CD4-positive, alpha-beta T cell (primary cell): ENCODE measurements at regions of chr20 and their contacts with region 1.

Region 1: DNA sequence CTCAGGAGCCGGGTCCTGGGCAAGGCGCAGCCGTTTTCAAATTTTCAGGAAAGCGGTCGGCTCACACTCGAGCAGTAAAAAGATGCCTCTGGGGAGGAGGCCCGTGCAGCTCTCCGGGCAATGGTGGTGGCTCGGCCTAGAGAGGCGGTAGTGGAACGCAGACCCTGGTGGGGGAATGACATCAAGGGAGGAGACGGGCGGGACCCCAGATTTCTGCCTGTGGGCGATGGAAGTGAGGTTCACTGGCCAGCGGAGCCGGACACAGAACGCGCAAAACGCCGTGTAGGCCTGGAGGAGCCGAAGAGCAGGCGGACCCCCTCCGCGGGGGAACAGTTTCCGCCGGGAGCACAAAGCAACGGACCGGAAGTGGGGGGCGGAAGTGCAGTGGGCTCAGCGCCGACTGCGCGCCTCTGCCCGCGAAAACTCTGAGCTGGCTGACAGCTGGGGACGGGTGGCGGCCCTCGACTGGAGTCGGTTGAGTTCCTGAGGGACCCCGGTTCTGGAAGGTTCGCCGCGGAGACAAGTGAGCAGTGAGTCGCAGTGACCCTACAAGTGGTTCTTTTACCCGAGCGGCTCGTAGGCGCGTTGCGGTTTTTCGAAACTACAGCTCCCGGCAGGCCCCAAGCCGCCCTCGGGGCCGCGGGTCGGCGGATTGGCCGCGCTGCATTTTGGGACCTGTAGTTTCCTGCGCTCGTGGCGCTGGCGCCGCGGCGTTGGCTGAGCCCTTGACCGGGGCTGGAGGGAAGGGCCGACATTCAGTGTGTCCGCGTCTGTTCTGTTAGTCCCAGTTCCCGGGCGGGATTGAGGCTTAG is at the start of gene RTEL1:
- DNase-seq: peak; percentile 77 to 93 (median 86)
- ATAC-seq: peak; percentile 83
- H3K4me3 ChIP-seq: peak within 1 kb of the TSS; percentile 76
- H3K4me3 Mint-ChIP-seq: peak within 1 kb of the TSS; percentile 98
- H3K27ac ChIP-seq: peak within 1 kb of the TSS; percentile 56 to 87
- H3K27ac Mint-ChIP-seq: peak within 1 kb of the TSS; percentile 96
- H3K4me1 ChIP-seq: peaks cover 47% of the 10 kb centered on the region
- H3K4me1 Mint-ChIP-seq: peaks cover 38% of the 10 kb centered on the region
- H3K27me3 ChIP-seq: no peaks in the 10 kb centered on the region
- H3K27me3 Mint-ChIP-seq: no peaks in the 10 kb centered on the region
- CTCF ChIP-seq: no peak
- total RNA-seq, gene RTEL1: 25.5 to 27.6 TPM

Region 2: DNA sequence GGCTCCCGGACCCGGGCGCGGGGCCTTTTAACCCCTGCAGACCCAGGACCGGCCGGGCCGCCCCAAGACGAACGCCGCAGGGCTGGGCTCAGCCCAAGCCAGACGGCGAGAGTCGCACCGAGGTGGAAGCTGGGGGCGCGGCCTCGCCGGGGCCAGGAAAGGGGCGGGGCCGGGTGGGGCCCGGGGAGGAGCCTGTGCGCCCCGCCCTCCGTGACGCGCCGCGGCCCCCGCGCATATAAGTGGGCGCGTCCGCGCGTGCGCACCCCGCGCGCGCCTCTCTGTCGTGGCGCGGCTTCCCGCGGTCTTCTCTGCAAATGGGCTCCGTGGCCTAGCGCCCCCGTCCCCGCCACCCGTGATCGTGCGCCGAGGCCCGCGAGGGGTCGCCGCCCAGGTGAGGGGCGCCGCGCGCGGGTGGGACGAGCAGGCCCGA is 137.6 kb before region 1 on chr20 and contains the start of gene PPDPF:
- CTCF ChIA-PET with region 1: no interaction called
- POLR2A ChIA-PET with region 1: interaction called, 12 read pairs
- intact Hi-C with region 1: loop called in 1 of 2 experiments (anchors 5 kb)
- DNase-seq: peak; percentile 75 to 95 (median 84)
- ATAC-seq: peak; percentile 80
- H3K4me3 ChIP-seq: peak within 1 kb of the TSS; percentile 65
- H3K4me3 Mint-ChIP-seq: peak within 1 kb of the TSS; percentile 88
- H3K27ac ChIP-seq: peak within 1 kb of the TSS in 1 of 2 donors; percentile 35
- H3K27ac Mint-ChIP-seq: peak within 1 kb of the TSS; percentile 69
- H3K4me1 ChIP-seq: peaks cover 29% of the 10 kb centered on the region
- H3K4me1 Mint-ChIP-seq: peaks cover 13% of the 10 kb centered on the region
- H3K27me3 ChIP-seq: no peaks in the 10 kb centered on the region
- H3K27me3 Mint-ChIP-seq: no peaks in the 10 kb centered on the region
- CTCF ChIP-seq: no peak
- total RNA-seq, gene PPDPF: 249 to 251 TPM

Region 3: DNA sequence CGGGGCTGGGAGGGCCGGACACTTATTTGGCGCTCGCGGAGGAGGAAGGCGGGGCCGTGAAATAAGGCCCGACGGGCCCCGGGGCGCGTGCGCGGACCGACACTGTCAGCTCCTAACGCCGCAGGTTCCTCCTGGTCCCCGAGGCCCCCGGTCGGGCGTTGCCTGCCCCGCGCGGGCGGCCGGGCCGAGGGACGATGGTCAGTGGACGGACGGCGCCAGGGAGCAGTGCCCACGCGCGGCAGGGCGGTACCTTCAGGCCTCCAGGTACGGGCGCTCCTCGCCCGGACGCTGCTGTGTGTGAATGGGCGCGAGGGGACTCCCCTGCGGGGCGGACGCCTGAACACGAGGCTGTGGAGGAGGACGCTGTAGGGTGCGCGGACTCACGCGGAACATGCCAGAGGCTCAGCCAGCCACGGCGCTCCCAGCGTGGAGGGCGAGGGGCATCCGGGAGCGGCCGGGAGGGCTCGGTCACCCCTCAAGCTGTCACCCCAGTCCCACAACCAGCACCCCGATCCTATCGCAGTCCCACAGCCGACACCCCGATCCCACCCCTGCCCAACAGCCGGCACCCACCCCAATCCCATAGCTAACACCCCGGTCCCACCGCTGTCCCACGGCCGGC is 30.9 kb before region 1 on chr20:
- CTCF ChIA-PET with region 1: no interaction called
- POLR2A ChIA-PET with region 1: interaction called, 12 read pairs
- intact Hi-C with region 1: loop called in 1 of 2 experiments (anchors 1 kb)
- DNase-seq: peak in 13 of 14 experiments; percentile 88 to 97 (median 95)
- ATAC-seq: peak; percentile 77
- H3K4me3 ChIP-seq: peak overlapping the region; percentile 95
- H3K4me3 Mint-ChIP-seq: peak overlapping the region; percentile 98
- H3K27ac ChIP-seq: peak overlapping the region; percentile 81 to 89
- H3K27ac Mint-ChIP-seq: peak overlapping the region; percentile 90
- H3K4me1 ChIP-seq: peaks cover 52% of the 10 kb centered on the region
- H3K4me1 Mint-ChIP-seq: peaks cover 38% of the 10 kb centered on the region
- H3K27me3 ChIP-seq: no peaks in the 10 kb centered on the region
- H3K27me3 Mint-ChIP-seq: no peaks in the 10 kb centered on the region
- CTCF ChIP-seq: no peak

Region 4: DNA sequence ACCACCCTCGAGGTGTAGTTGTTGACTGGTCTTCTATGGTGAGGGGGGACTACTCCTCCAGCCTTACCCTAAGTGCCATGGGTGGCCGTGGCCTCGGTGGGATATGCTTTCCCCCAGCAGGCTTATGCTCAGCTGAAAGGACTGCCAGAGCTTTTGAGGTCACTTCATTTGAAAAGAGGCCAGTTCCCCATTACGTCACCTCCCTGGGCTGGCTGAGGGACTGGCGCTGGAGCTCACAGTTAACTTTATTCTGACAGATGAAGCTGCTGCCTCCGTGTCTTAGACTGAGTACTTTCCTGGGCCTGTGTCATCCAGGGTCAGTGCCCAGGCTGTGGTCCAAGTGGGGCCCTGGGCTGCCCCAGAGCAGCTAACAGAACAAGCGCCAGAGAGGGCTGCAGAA is 554.6 kb after region 1 on chr20:
- CTCF ChIA-PET with region 1: no interaction called
- POLR2A ChIA-PET with region 1: no interaction called
- intact Hi-C with region 1: no loop called
- DNase-seq: no peak
- ATAC-seq: no peak
- H3K4me3 ChIP-seq: no peak overlapping the region
- H3K4me3 Mint-ChIP-seq: no peak overlapping the region
- H3K27ac ChIP-seq: no peak overlapping the region
- H3K27ac Mint-ChIP-seq: no peak overlapping the region
- H3K4me1 ChIP-seq: peaks cover 15% of the 10 kb centered on the region
- H3K4me1 Mint-ChIP-seq: peaks cover 18% of the 10 kb centered on the region
- H3K27me3 ChIP-seq: no peaks in the 10 kb centered on the region
- H3K27me3 Mint-ChIP-seq: no peaks in the 10 kb centered on the region
- CTCF ChIP-seq: no peak

Region 5: GRCh38 chr20:64255361-64256281 is 597.5 kb after region 1 on chr20 and contains the start of gene PCMTD2:
- CTCF ChIA-PET with region 1: no interaction called
- POLR2A ChIA-PET with region 1: no interaction called
- intact Hi-C with region 1: loop called in 1 of 2 experiments (anchors 5 kb)
- DNase-seq: peak; percentile 60 to 94 (median 84)
- ATAC-seq: peak; percentile 86
- H3K4me3 ChIP-seq: peak within 1 kb of the TSS; percentile 90
- H3K4me3 Mint-ChIP-seq: peak within 1 kb of the TSS; percentile 94
- H3K27ac ChIP-seq: peak within 1 kb of the TSS; percentile 74 to 77
- H3K27ac Mint-ChIP-seq: peak within 1 kb of the TSS; percentile 94
- H3K4me1 ChIP-seq: peaks cover 34% of the 10 kb centered on the region
- H3K4me1 Mint-ChIP-seq: peaks cover 54% of the 10 kb centered on the region
- H3K27me3 ChIP-seq: no peaks in the 10 kb centered on the region
- H3K27me3 Mint-ChIP-seq: peaks cover 5% of the 10 kb centered on the region
- CTCF ChIP-seq: no peak
- total RNA-seq, gene PCMTD2: 68.5 to 76.5 TPM